Right lobe of liver (tissue), 6 donors: ENCODE measurements at regions of chr18 and their contacts with region 1.

Region 1: DNA sequence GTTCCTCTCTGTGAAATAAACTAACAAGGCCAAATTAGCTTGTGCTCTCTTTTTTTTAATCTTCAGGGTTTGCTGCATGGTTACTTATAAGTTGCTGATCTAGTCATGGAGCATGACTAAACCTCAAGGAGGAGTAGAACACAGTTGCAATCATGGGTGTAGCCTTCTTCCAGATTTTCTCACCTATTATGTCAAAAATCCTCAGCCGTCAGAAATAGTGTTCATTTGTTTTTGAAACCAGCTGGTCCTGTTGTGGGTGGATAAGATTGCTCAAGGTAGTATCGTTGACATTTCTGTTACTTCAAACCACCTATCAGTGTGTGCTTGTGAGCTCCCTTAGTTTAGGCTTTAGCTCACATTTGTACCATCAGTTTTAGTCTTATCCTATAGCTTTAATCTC is 11.2 kb downstream of the RELCH start:
- DNase-seq: no peak
- ATAC-seq: no peak
- H3K4me3 ChIP-seq: no peak overlapping the region
- H3K27ac ChIP-seq: no peak overlapping the region
- H3K4me1 ChIP-seq: no peaks in the 10 kb centered on the region
- H3K27me3 ChIP-seq: no peaks in the 10 kb centered on the region
- CTCF ChIP-seq: no peak
- POLR2A ChIP-seq: no peak

Region 2: GRCh38 chr18:62018034-62018758 is 180.1 kb before region 1 on chr18:
- intact Hi-C with region 1: no loop called
- DNase-seq: no peak
- ATAC-seq: peak in 3 of 4 donors; percentile 14 to 44 (median 39)
- H3K4me3 ChIP-seq: no peak overlapping the region
- H3K27ac ChIP-seq: no peak overlapping the region
- H3K4me1 ChIP-seq: no peaks in the 10 kb centered on the region
- H3K27me3 ChIP-seq: no peaks in the 10 kb centered on the region
- CTCF ChIP-seq: no peak
- POLR2A ChIP-seq: no peak

Region 3: DNA sequence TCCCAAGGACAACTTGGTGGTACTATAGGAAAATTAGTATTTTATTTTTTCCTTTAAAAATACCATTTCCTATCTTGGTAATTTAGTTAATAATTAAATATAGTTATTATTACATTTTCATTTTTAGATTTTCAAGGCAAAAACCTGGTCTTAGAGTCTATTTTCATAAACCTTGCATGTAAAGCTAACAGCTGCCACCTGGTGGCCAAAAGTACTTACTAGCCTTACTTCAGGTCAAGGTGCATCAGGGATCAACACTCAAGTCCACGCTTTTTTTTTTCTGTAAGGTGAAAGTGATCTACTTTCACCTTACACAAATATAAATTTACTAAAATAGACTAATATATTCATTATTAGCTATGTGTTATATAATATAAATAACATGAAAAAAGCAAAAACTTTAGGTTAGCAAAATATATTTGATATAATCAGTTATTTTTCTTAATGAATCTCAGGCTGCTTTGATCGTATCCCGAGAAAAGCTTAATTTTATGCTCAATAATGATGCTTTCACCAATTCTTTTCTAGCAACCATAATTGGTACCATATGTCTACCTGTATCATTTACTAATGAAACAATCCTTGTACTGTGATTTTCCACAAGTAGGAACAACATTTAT is 51.3 kb after region 1 on chr18:
- intact Hi-C with region 1: loop called in 1 of 2 experiments (anchors 10 kb)
- DNase-seq: peak; percentile 56 to 71 (median 57)
- ATAC-seq: peak; percentile 84 to 91 (median 89)
- H3K4me3 ChIP-seq: no peak overlapping the region
- H3K27ac ChIP-seq: no peak overlapping the region
- H3K4me1 ChIP-seq: peaks cover 0 to 15% (median 7%) of the 10 kb centered on the region in 4 donors
- H3K27me3 ChIP-seq: no peaks in the 10 kb centered on the region
- CTCF ChIP-seq: peak; percentile 64 to 90 (median 86)
- POLR2A ChIP-seq: no peak